Testis (tissue), 5 donors: ENCODE measurements at regions of chr12 and their contacts with region 1.

Region 1: DNA sequence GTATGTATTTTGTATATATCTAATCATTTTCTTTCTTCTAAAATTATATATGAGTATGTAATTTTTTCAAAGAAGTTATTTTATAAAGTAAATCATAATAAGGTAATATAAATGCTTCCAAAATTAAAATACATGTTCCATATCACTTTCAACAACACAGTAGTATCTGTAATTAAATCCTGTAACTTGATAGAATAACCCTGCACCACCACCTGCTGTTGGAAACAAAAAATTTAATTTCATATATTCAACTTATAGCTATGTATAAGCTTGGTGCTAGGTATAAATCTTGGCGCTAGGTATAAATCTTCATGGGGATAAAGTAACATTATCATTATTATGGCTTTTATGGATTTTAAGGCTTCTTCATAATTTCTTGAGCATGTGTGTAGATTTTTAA is 149.7 kb upstream of the DCN start:
- DNase-seq: no peak
- H3K4me3 ChIP-seq: no peak overlapping the region
- H3K27ac ChIP-seq: no peak overlapping the region
- H3K4me1 ChIP-seq: no peaks in the 10 kb centered on the region
- H3K27me3 ChIP-seq: no peaks in the 10 kb centered on the region
- CTCF ChIP-seq: peak in 2 of 3 experiments; percentile 8 to 11
- POLR2A ChIP-seq: no peak

Region 2: GRCh38 chr12:90978117-90978770 is 354.1 kb before region 1 on chr12:
- intact Hi-C with region 1: loop called (anchors 10 kb)
- DNase-seq: no peak
- H3K4me3 ChIP-seq: no peak overlapping the region
- H3K27ac ChIP-seq: no peak overlapping the region
- H3K4me1 ChIP-seq: no peaks in the 10 kb centered on the region
- H3K27me3 ChIP-seq: no peaks in the 10 kb centered on the region
- CTCF ChIP-seq: peak; percentile 58 to 78 (median 63)
- POLR2A ChIP-seq: no peak